CD4-positive, alpha-beta memory T cell (primary cell): ENCODE measurements at regions of chr10 and their contacts with region 1.

Region 1: GRCh38 chr10:987870-988666 is at the start of gene GTPBP4:
- DNase-seq: peak; percentile 91 to 98 (median 96)
- H3K4me3 ChIP-seq: peak within 1 kb of the TSS; percentile 82 to 95
- H3K4me3 Mint-ChIP-seq: peak within 1 kb of the TSS; percentile 91 to 99 (median 95)
- H3K27ac ChIP-seq: peak within 1 kb of the TSS; percentile 83
- H3K27ac Mint-ChIP-seq: peak within 1 kb of the TSS; percentile 96 to 99 (median 98)
- H3K4me1 ChIP-seq: peaks cover 30% of the 10 kb centered on the region
- H3K4me1 Mint-ChIP-seq: peaks cover 23 to 47% (median 33%) of the 10 kb centered on the region in 4 donors
- H3K27me3 ChIP-seq: no peaks in the 10 kb centered on the region
- H3K27me3 Mint-ChIP-seq: no peaks in the 10 kb centered on the region
- total RNA-seq, gene GTPBP4: 46.0 to 47.0 TPM

Region 2: DNA sequence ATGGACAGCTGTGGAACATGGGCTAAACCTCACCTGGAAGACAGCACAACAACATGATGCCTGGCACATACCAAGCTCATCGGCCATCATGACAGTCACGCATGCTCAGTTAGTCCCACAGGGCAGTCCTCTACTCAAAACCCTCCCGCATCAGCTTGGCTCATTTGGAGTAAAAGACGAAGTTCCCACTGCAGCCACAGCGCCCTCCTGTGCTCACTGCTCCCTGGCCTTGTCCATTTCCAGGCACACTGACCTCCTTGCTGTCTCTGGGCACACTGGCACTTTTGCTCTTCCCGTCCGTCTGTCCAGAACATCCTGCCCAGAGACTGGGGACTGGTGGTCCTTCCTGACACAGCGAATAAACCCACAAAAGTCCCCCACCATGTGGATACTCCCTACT is 122.8 kb before region 1 on chr10:
- CTCF ChIA-PET with region 1: no interaction called
- POLR2A ChIA-PET with region 1: no interaction called
- intact Hi-C with region 1: loop called (anchors 5 kb)
- DNase-seq: no peak
- H3K4me3 ChIP-seq: no peak overlapping the region
- H3K4me3 Mint-ChIP-seq: no peak overlapping the region
- H3K27ac ChIP-seq: no peak overlapping the region
- H3K27ac Mint-ChIP-seq: peak overlapping the region in 3 of 7 donors; percentile 18 to 78 (median 48)
- H3K4me1 ChIP-seq: no peaks in the 10 kb centered on the region
- H3K4me1 Mint-ChIP-seq: peaks cover 15 to 26% (median 19%) of the 10 kb centered on the region in 4 donors
- H3K27me3 ChIP-seq: no peaks in the 10 kb centered on the region
- H3K27me3 Mint-ChIP-seq: no peaks in the 10 kb centered on the region

Region 3: DNA sequence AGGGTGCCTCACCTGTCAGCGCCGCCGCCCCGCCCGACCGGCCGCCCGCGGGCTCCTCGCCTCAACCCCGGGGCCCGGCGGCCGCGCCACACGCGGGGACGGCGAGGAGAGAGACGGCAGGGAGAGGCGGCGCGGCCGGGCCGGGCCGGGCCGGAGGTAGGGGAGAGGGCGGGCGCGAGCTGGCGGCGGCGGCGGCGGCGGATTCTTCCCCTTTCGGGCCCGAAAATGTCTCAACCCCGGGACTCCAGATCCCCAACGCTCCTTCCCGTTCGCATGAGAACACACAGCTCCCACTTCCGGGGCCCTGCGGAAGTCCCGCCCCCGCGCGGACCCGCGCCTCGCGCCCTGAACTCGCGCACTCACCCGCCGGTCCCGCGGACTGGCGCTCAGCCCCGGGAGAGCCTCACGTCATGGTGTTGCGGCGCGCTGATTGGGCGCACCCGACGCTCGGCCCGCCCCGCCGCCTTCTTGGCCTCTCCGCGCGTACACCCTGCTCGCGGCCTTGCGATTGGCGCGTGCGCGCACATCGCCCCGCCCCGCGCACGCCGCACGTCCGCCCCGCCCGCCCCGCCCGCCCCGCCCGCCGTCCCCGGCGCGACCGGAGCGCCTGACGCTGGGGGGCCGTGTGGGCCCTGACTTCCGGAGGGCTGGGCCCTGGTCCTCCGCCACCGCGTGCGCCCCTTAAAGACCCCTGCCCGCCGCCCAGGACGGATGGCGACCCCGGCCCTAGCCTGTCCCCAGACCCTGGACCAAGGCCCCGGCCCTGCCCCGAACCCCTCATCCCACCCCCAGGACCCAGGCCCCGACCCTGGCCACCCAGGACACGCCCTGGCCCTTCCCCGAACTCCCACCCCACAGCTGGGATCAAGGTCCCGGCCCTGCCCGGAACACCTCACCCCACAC is 56.4 kb before region 1 on chr10 and contains the start of gene LARP4B:
- CTCF ChIA-PET with region 1: interaction called, 6 read pairs
- POLR2A ChIA-PET with region 1: interaction called, 12 read pairs
- intact Hi-C with region 1: loop called (anchors 1 kb)
- DNase-seq: peak; percentile 94 to 99 (median 98)
- H3K4me3 ChIP-seq: peak within 1 kb of the TSS; percentile 38 to 67
- H3K4me3 Mint-ChIP-seq: peak within 1 kb of the TSS; percentile 93 to 99 (median 95)
- H3K27ac ChIP-seq: peak within 1 kb of the TSS; percentile 73
- H3K27ac Mint-ChIP-seq: peak within 1 kb of the TSS; percentile 78 to 98 (median 97)
- H3K4me1 ChIP-seq: peaks cover 38% of the 10 kb centered on the region
- H3K4me1 Mint-ChIP-seq: peaks cover 23 to 43% (median 33%) of the 10 kb centered on the region in 4 donors
- H3K27me3 ChIP-seq: no peaks in the 10 kb centered on the region
- H3K27me3 Mint-ChIP-seq: no peaks in the 10 kb centered on the region
- total RNA-seq, gene LARP4B: 94.9 to 99.7 TPM